ENCODE measurements at regions of chr10 and their contacts with region 1.

Region 1: GRCh38 chr10:36880898-36881297 is 244.5 kb upstream of the ANKRD30A start:
- DNase-seq: peak; percentile 15
- H3K4me3 ChIP-seq: no peak overlapping the region
- H3K27ac ChIP-seq: no peak overlapping the region
- H3K4me1 ChIP-seq: no peaks in the 10 kb centered on the region
- H3K27me3 ChIP-seq: no peaks in the 10 kb centered on the region
- CTCF ChIP-seq: peak; percentile 50 to 69

Region 2: GRCh38 chr10:35613597-35614226 is 1267.2 kb before region 1 on chr10:
- CTCF ChIA-PET with region 1: interaction called, 14 read pairs
- dilution Hi-C with region 1: no loop called
- in situ Hi-C with region 1: no loop called
- intact Hi-C with region 1: loop called (anchors 2 kb)
- DNase-seq: no peak
- H3K4me3 ChIP-seq: no peak overlapping the region
- H3K27ac ChIP-seq: no peak overlapping the region
- H3K4me1 ChIP-seq: no peaks in the 10 kb centered on the region
- H3K27me3 ChIP-seq: no peaks in the 10 kb centered on the region
- CTCF ChIP-seq: peak; percentile 36 to 58